Heart right ventricle (tissue), 16 donors: ENCODE measurements at regions of chr17 and their contacts with region 1.

Region 1: GRCh38 chr17:8057691-8058114 is 18.8 kb downstream of the ALOX15B start:
- DNase-seq: no peak
- ATAC-seq: peak; percentile 77 to 91 (median 84)
- H3K4me3 ChIP-seq: no peak overlapping the region
- H3K27ac ChIP-seq: no peak overlapping the region
- H3K4me1 ChIP-seq: peaks cover 0 to 40% (median 5%) of the 10 kb centered on the region in 9 donors
- H3K27me3 ChIP-seq: peaks cover 7 to 69% (median 56%) of the 10 kb centered on the region in 7 donors
- CTCF ChIP-seq: peak; percentile 56 to 82 (median 76)

Region 2: DNA sequence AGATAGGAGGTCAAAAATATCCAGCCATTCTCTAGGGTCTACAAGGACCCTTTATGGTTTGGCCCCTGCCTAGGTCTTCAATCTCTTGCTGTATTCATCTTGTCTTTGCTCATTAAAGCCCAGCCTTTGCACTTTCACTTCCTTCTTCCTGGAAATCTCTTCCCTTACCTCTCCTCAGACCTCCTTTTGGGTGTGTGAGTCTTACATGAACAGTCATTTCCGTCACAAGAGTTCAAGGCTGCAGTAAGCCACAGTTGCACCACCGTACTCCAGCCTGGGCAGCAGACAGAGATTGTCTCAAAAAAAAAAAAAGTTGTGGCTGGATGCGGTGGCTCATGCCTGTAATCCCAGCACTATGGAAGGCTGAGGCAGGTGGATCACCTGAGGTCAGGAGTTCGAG is 412.9 kb before region 1 on chr17:
- intact Hi-C with region 1: no loop called
- DNase-seq: no peak
- ATAC-seq: no peak
- H3K4me3 ChIP-seq: no peak overlapping the region
- H3K27ac ChIP-seq: no peak overlapping the region
- H3K4me1 ChIP-seq: peaks cover 0 to 4% (median 0%) of the 10 kb centered on the region in 9 donors
- H3K27me3 ChIP-seq: peaks cover 0 to 22% (median 12%) of the 10 kb centered on the region in 7 donors
- CTCF ChIP-seq: no peak

Region 3: DNA sequence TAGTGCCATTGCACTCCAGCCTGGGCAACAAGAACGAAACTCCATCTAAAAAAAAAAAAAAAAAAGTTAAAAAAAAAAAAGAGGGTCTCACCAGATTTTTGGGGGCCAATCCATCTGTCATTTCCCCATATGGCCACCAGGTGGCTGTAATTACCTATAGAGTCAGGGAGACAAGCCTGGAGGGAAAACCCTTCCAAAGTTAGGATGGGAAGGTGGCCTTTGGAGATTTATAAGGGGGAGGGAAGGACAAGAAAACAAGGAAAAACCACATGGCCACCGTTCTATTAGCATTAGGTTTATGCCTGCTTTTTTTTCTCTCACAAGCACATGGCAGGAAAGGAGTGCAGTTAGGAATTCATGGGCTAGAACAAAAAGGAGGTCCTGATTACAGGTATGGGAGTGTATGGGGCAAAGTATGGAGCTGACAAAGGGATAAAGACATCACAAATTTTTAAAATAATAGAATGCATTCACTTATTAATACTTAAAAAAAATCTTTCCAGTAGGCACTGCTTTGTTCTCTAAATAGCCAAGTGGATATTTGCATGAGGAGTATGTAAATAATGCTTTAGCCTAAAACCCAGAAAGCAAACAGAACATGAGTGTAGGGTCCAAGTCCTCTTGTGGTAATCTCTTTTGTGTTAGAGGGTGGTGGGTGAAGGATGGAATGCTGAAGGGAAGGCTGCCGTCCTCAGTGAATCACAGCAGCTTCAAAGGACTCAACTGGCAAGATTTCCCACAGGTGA is 194.8 kb before region 1 on chr17:
- intact Hi-C with region 1: loop called in 3 of 10 experiments (anchors 5 kb)
- DNase-seq: peak in 1 of 2 donors; percentile 62
- ATAC-seq: no peak
- H3K4me3 ChIP-seq: no peak overlapping the region
- H3K27ac ChIP-seq: no peak overlapping the region
- H3K4me1 ChIP-seq: peaks cover 0 to 26% (median 14%) of the 10 kb centered on the region in 9 donors
- H3K27me3 ChIP-seq: no peaks in the 10 kb centered on the region
- CTCF ChIP-seq: peak; percentile 65 to 83 (median 81)

Region 4: GRCh38 chr17:7931709-7932482 is 125.8 kb before region 1 on chr17 and contains the starts of genes CNTROB and TRAPPC1:
- intact Hi-C with region 1: loop called in 1 of 10 experiments (anchors 5 kb)
- DNase-seq: peak; percentile 99 to 100
- ATAC-seq: peak; percentile 98 to 99 (median 99)
- H3K4me3 ChIP-seq: peak within 1 kb of the TSS; percentile 46 to 94 (median 77)
- H3K27ac ChIP-seq: peak within 1 kb of the TSS in 9 of 10 donors; percentile 49 to 92 (median 79)
- H3K4me1 ChIP-seq: peaks cover 2 to 36% (median 22%) of the 10 kb centered on the region in 9 donors
- H3K27me3 ChIP-seq: no peaks in the 10 kb centered on the region
- CTCF ChIP-seq: no peak
- total RNA-seq, gene CNTROB: 7.8 to 14.4 (median 10.7) TPM
- total RNA-seq, gene TRAPPC1: 104 to 166 (median 121) TPM

Region 5: GRCh38 chr17:8016632-8017478 is 40.8 kb before region 1 on chr17:
- intact Hi-C with region 1: loop called in 1 of 10 experiments (anchors 5 kb)
- DNase-seq: no peak
- ATAC-seq: peak; percentile 20 to 69 (median 56)
- H3K4me3 ChIP-seq: peak overlapping the region; percentile 16 to 57 (median 46)
- H3K27ac ChIP-seq: no peak overlapping the region
- H3K4me1 ChIP-seq: peaks cover 0 to 54% (median 15%) of the 10 kb centered on the region in 9 donors
- H3K27me3 ChIP-seq: peaks cover 0 to 26% (median 15%) of the 10 kb centered on the region in 7 donors
- CTCF ChIP-seq: peak; percentile 15 to 73 (median 54)

Region 6: GRCh38 chr17:8300627-8301242 is 243.0 kb after region 1 on chr17:
- intact Hi-C with region 1: loop called in 1 of 10 experiments (anchors 5 kb)
- DNase-seq: peak; percentile 38 to 45
- ATAC-seq: peak; percentile 65 to 93 (median 91)
- H3K4me3 ChIP-seq: no peak overlapping the region
- H3K27ac ChIP-seq: no peak overlapping the region
- H3K4me1 ChIP-seq: peaks cover 0 to 13% (median 3%) of the 10 kb centered on the region in 9 donors
- H3K27me3 ChIP-seq: no peaks in the 10 kb centered on the region
- CTCF ChIP-seq: peak; percentile 76 to 90 (median 85)

Region 7: DNA sequence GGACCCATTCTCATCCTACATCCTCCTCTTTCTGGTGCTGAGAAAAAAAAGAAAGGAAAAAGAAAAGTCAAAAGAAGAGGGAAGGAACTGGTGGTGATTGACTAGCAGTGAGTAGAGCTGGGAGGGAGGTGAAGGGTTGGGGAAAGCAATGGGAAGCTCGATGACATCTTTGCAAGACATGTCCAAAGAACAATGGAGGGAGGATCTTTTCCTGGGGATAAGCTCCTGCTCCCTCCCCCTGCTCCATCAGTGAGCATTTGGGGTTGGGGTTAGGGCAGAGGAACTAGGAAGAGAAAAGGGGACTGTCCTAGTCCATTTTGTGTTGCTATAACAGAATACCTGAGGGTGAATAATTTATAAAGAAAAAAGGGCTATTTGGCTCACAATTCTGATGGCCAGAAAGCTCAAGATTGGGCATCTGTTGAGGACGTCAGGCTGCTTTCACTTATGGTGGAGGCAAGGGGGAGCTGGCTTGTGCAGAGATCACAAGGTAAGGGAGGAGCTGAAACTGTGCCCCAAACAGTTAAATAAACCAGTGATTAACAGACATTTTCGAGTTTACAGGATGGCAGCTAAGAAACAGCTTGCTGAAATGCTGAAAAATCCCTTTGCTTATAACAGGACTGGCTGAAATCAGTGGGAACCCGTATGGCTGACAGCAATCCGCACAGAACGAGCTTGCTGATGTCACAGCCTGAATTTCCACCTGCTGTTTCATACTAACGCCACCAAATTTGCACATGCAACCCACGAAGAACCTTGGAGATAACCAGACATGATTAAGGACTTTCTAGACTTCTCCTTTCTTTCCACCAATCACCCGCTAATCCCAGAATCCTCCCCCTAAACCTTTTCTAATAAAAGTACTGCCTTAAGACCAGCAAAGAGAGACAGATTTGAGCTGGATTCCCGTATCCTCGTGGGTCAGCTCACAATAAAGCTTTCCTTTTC is 280.4 kb after region 1 on chr17:
- intact Hi-C with region 1: no loop called
- DNase-seq: no peak
- ATAC-seq: no peak
- H3K4me3 ChIP-seq: no peak overlapping the region
- H3K27ac ChIP-seq: no peak overlapping the region
- H3K4me1 ChIP-seq: peaks cover 0 to 10% (median 0%) of the 10 kb centered on the region in 9 donors
- H3K27me3 ChIP-seq: no peaks in the 10 kb centered on the region
- CTCF ChIP-seq: no peak